Activated T-helper 1 cell treated with anti-CD3 and anti-CD28 coated beads, Interleukin-12 subunit alpha, Interleukin-12 subunit beta, Interleukin-2, Interleukin-4 antibody, amounts not matched to agents 30 ng/mL and 10 ng/mL and 1 ng/mL, durations not matched to agents 14 hours and 24 hours and 36 hours (primary cell): ENCODE measurements at regions of chr21 and their contacts with region 1.

Region 1: DNA sequence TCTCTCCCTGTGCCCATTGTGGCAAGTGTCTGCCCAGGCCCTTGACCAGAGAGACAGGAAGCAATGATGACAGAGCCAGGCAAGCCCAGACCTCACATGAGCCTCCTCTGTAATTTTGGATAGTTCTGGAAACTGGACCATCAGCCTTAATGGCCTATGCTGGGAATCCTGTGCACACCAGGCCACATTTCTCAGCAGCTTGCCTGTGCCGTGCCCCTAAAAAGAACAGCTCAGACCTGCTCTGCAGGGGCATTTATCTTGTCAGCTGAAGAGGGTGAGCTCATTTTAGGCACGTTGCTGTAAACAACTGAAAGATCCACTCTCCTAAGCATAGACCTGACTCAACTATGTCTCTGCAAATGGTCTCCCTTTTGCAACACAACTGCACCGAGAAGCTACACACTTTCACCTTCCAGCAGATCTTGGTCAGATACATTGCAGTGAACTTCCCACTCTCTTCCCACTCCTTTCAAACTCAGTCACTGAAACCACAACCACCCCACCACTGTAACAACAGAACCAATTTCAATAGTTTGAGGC is 53.5 kb upstream of the BACH1 start:
- DNase-seq: no peak
- H3K4me3 Mint-ChIP-seq: no peak overlapping the region
- H3K27ac Mint-ChIP-seq: peak overlapping the region; percentile 49
- H3K4me1 Mint-ChIP-seq: peaks cover 9% of the 10 kb centered on the region
- H3K27me3 Mint-ChIP-seq: peaks cover 36% of the 10 kb centered on the region

Region 2: DNA sequence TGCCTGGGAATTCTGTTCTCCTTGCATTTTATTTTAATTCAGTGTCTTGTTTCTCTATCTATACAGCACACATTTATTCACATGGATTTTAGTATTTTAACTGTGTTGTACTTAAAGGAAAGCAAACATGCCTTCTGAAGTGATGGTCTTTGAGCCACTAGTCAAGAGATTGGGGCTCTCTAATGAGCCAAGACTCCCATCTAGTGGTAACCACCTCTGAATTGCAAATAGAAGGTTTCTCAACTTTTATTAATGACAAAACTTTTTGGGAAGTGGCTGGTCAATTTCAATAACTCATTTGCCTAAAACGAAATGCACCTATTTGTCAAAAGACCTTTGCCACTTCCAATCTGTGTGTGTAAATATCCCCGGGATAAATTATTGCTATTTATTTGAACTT is 452.1 kb before region 1 on chr21:
- intact Hi-C with region 1: no loop called
- DNase-seq: no peak
- H3K4me3 Mint-ChIP-seq: no peak overlapping the region
- H3K27ac Mint-ChIP-seq: no peak overlapping the region
- H3K4me1 Mint-ChIP-seq: no peaks in the 10 kb centered on the region
- H3K27me3 Mint-ChIP-seq: no peaks in the 10 kb centered on the region

Region 3: GRCh38 chr21:29078869-29079767 is 166.1 kb before region 1 on chr21:
- intact Hi-C with region 1: loop called (anchors 5 kb)
- DNase-seq: no peak
- H3K4me3 Mint-ChIP-seq: peak overlapping the region; percentile 86
- H3K27ac Mint-ChIP-seq: peak overlapping the region; percentile 65
- H3K4me1 Mint-ChIP-seq: peaks cover 47% of the 10 kb centered on the region
- H3K27me3 Mint-ChIP-seq: peaks cover 2% of the 10 kb centered on the region

Region 4: DNA sequence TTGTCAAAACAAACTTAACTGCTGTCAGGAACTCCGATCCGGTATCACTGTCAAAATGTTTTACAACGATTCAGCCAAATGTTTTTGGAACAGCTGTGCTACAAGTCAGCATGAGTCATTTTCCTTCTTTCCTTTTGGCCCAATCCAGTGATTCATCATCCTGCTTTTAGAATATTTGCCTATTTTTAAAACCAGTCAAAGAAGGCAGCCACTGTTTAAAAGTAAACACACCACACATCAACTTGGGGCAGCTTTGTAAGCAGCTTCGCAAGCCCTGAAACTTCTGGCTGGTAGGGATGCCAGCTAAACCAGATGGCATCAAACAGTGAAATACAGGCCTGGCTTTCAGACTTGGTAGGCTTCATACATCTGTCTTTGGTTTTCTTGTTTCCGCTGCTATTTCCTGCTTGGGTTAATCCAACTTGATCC is 99.8 kb before region 1 on chr21:
- intact Hi-C with region 1: loop called (anchors 1 kb)
- DNase-seq: no peak
- H3K4me3 Mint-ChIP-seq: no peak overlapping the region
- H3K27ac Mint-ChIP-seq: no peak overlapping the region
- H3K4me1 Mint-ChIP-seq: peaks cover 24% of the 10 kb centered on the region
- H3K27me3 Mint-ChIP-seq: no peaks in the 10 kb centered on the region

Region 5: DNA sequence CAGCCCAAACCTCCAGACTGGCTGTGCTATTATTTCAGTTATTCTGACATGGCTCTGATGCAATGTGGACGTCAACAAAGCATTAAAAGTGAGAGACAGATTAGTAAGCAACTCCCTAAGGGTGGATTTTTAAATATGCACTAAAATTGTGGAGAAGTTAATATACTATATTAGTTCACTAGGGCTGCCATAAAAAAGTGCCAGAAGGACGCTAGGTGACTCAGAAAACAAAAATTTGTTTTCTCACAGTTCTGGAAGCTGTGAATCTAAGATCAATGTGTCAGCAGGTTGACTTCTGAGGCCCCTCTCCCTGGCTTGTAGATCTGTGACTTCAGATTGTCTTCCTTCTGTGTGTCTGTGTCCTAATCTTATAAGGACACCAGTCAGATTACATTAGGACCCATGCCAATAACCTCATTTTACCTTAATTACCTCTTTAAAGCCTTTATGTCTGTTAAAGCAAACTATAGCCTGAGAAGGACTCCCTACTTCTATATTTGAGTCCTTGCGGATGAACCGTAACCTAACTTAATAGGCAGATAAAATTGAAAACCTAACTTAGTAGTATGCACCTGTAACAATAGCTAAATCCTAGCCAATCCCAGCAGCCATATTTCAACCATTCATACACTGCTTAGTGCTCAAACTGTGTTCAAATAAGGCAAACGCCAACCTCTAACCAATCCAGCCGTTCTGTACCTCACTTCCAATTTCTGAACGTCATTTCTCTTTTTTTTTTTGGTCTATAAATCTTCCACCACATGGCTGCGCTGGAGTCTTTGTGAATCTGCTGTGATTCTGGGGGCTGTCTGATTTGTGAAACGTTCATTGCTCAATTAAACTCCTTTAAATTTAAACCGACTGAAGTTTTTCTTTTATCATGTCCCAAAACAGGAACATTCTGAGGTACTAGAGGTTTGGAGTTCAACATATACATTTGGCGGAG is 12.3 kb before region 1 on chr21:
- intact Hi-C with region 1: loop called (anchors 1 kb)
- DNase-seq: no peak
- H3K4me3 Mint-ChIP-seq: no peak overlapping the region
- H3K27ac Mint-ChIP-seq: no peak overlapping the region
- H3K4me1 Mint-ChIP-seq: peaks cover 51% of the 10 kb centered on the region
- H3K27me3 Mint-ChIP-seq: peaks cover 30% of the 10 kb centered on the region

Region 6: GRCh38 chr21:29279558-29279957 is 34.4 kb after region 1 on chr21:
- intact Hi-C with region 1: no loop called
- DNase-seq: no peak
- H3K4me3 Mint-ChIP-seq: no peak overlapping the region
- H3K27ac Mint-ChIP-seq: no peak overlapping the region
- H3K4me1 Mint-ChIP-seq: no peaks in the 10 kb centered on the region
- H3K27me3 Mint-ChIP-seq: peaks cover 19% of the 10 kb centered on the region

Region 7: GRCh38 chr21:29343519-29343918 is 98.3 kb after region 1 on chr21:
- intact Hi-C with region 1: loop called (anchors 1 kb)
- DNase-seq: no peak
- H3K4me3 Mint-ChIP-seq: no peak overlapping the region
- H3K27ac Mint-ChIP-seq: no peak overlapping the region
- H3K4me1 Mint-ChIP-seq: peaks cover 32% of the 10 kb centered on the region
- H3K27me3 Mint-ChIP-seq: no peaks in the 10 kb centered on the region

Region 8: DNA sequence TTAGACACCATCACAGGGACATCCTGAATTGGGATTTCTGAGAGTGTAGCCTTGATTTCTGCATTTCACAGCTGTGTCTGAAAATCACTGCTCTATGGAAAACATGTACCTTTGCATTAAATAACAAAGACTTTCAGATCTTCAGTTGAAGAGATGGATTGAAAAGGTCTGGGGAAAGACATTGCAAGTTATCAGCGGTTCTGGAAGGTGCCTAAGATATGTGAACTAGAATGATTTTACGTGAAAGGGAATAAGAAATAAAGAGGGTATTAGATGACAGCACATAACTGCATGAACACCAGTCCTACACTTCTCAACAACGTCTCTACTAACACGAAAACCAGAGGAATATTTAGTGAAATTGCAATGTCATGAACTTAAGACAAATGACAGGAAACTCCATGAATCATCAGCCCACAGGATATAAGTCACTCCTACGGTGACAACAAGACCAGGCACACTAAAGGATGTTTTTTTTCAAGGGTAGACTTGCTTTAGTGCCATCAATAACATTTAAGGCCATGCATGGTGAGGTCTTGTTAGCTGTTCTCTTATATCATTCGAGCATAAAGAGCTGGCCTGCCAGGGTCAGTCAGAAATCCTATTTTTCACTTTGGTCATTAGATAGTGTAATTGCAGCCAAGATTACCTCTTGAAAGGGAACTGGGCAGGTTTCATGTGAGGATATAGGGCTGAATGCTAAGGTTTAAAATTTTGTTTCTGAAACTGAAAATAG is 411.5 kb after region 1 on chr21:
- intact Hi-C with region 1: loop called (anchors 2 kb)
- DNase-seq: peak; percentile 14
- H3K4me3 Mint-ChIP-seq: peak overlapping the region; percentile 45
- H3K27ac Mint-ChIP-seq: peak overlapping the region; percentile 82
- H3K4me1 Mint-ChIP-seq: peaks cover 39% of the 10 kb centered on the region
- H3K27me3 Mint-ChIP-seq: no peaks in the 10 kb centered on the region

Region 9: GRCh38 chr21:30668776-30669175 is 1423.6 kb after region 1 on chr21:
- intact Hi-C with region 1: no loop called
- DNase-seq: no peak
- H3K4me3 Mint-ChIP-seq: no peak overlapping the region
- H3K27ac Mint-ChIP-seq: no peak overlapping the region
- H3K4me1 Mint-ChIP-seq: no peaks in the 10 kb centered on the region
- H3K27me3 Mint-ChIP-seq: no peaks in the 10 kb centered on the region

Region 10: DNA sequence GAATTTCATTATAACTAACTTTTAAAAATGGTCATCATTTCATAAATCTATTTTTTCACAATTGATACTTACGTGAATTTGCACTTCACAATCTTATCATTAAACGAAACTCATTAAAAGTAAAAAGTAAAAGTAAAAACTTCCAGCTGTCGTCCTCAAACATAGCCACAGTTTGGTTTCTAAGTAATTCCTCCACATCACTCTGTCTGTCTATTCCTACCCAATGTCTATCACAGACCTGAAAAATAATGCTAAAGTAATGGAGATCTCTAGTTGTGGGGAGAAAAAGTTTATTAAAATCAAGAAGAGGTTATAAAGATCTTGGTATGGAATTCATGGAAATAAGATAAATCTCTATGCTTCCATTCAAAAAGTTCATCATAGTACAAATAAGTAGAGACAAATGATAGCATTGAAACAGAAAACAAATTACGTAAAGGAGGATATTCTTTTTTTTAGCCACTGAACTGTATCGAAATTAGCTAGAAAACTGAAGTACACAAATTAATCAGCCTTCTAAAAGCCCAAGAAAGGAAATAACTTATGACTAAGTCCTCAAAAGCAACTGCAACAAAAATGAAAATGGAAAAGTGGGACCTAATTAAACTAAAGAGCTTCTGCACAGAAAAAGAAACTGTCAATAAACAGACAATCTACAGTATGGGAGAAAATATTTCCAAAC is 1950.3 kb after region 1 on chr21:
- intact Hi-C with region 1: no loop called
- DNase-seq: no peak
- H3K4me3 Mint-ChIP-seq: peak overlapping the region; percentile 53
- H3K27ac Mint-ChIP-seq: peak overlapping the region; percentile 84
- H3K4me1 Mint-ChIP-seq: peaks cover 51% of the 10 kb centered on the region
- H3K27me3 Mint-ChIP-seq: no peaks in the 10 kb centered on the region